ENCODE measurements at regions of chr6 and their contacts with region 1.

Region 1: GRCh38 chr6:150741633-150742504 is 123.6 kb upstream of the MTHFD1L start:
- H3K4me3 Mint-ChIP-seq: no peak overlapping the region
- H3K27ac Mint-ChIP-seq: no peak overlapping the region
- H3K4me1 Mint-ChIP-seq: no peaks in the 10 kb centered on the region
- H3K27me3 Mint-ChIP-seq: peaks cover 3% of the 10 kb centered on the region

Region 2: DNA sequence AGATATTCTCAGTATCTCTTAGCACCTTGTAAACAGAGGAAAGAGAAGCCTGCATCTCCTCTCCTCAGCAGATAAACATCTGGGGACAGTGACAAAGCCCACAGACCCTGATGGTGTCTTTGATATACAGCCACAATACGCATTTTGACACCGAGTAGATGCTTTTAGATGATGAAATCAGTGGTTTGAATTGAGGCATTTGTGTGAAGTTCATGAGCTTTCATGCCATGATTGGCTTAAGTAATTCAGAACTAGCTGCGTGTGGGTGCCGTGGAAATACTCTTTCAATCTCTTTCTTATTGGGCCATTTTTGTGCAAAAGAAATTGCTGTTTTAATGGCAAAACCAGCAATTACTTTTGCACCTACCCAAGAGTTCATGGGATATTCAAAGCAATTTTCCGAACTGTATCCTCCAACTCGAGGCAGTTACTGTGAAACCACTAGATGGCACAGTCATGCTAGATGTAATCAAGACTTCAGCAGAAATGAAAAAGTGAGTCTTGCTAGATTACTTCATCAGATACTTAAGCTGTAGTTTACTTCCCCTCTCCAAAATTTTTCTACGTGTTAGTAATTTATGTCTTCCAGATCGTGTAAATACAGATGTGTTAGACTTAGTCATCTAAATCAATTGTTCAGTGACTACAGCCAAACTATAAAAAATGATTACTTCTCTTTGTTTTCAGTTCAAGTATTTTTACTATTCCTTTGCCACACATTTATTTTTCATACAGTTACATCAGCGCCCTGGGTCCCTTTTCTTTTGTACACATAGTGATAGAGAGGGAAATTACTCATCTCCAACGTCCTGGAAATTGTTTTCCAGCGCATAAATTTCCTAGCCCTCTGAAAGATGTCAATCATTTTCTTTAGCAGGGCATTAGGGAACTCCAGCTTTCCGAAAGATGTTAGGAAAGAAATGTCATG is 323.7 kb before region 1 on chr6:
- intact Hi-C with region 1: loop called (anchors 1 kb)
- H3K4me3 Mint-ChIP-seq: no peak overlapping the region
- H3K27ac Mint-ChIP-seq: no peak overlapping the region
- H3K4me1 Mint-ChIP-seq: peaks cover 17% of the 10 kb centered on the region
- H3K27me3 Mint-ChIP-seq: peaks cover 23% of the 10 kb centered on the region

Region 3: GRCh38 chr6:150573041-150573681 is 168.7 kb before region 1 on chr6:
- intact Hi-C with region 1: no loop called
- H3K4me3 Mint-ChIP-seq: no peak overlapping the region
- H3K27ac Mint-ChIP-seq: no peak overlapping the region
- H3K4me1 Mint-ChIP-seq: peaks cover 7% of the 10 kb centered on the region
- H3K27me3 Mint-ChIP-seq: peaks cover 48% of the 10 kb centered on the region

Region 4: GRCh38 chr6:150641398-150642139 is 100.3 kb before region 1 on chr6:
- intact Hi-C with region 1: no loop called
- H3K4me3 Mint-ChIP-seq: no peak overlapping the region
- H3K27ac Mint-ChIP-seq: no peak overlapping the region
- H3K4me1 Mint-ChIP-seq: no peaks in the 10 kb centered on the region
- H3K27me3 Mint-ChIP-seq: peaks cover 17% of the 10 kb centered on the region

Region 5: GRCh38 chr6:150685860-150686259 is 56.0 kb before region 1 on chr6:
- intact Hi-C with region 1: loop called (anchors 5 kb)
- H3K4me3 Mint-ChIP-seq: no peak overlapping the region
- H3K27ac Mint-ChIP-seq: no peak overlapping the region
- H3K4me1 Mint-ChIP-seq: peaks cover 16% of the 10 kb centered on the region
- H3K27me3 Mint-ChIP-seq: peaks cover 13% of the 10 kb centered on the region

Region 6: GRCh38 chr6:150830439-150831165 is 88.7 kb after region 1 on chr6:
- intact Hi-C with region 1: no loop called
- H3K4me3 Mint-ChIP-seq: no peak overlapping the region
- H3K27ac Mint-ChIP-seq: no peak overlapping the region
- H3K4me1 Mint-ChIP-seq: no peaks in the 10 kb centered on the region
- H3K27me3 Mint-ChIP-seq: no peaks in the 10 kb centered on the region